ENCODE measurements at regions of chr7 and their contacts with region 1.

Region 1: DNA sequence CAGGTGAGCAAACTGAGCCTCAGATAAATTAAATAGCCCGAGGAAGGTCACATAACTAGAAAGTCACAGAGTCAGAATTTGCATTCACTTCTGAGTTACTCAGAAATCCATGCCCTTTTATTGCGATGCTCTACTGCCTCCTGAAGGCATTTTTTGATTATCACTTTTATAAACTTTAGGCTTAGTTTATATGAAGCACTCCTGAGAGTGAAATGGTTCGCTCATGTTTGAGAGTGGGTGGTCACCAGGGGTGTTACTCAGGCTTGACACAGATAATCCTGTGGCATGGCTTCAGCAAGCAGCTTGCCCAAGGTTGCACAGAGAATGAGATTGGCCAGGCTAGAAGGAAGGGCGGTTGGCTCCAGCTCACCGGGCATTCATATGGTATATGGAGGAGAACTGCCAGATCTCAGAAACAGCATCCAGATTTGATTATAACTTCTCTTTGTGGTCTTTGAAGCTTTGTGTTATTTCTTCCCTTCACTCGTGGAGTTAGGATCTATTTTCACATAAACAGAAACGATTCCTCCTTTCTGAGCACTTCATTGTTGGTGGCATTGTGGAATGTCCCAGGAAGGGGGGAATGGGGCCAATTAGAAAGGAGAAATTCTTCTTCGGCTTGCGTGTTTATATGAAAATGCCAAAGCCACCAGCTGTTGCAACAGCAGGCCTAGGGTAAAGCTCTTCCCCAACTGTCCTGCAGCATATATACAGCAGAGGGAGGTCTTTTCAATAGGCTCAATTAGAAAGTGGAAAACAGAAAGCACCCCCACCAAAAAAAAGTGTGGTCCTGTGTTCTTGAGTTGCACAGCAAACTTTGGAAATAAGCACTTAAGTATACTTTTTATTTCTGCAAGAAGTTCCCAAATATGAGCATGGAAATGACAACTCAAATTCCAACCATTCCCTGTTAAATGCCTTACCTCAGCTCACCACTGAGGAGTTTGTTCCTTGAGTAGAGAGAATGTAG is 628.8 kb downstream of the SUGCT start:
- DNase-seq: no peak
- H3K4me3 ChIP-seq: peak overlapping the region; percentile 9 to 16
- H3K27ac ChIP-seq: peak overlapping the region; percentile 60 to 67
- H3K4me1 ChIP-seq: peaks cover 0 to 41% (median 13%) of the 10 kb centered on the region in 4 donors
- H3K27me3 ChIP-seq: no peaks in the 10 kb centered on the region
- CTCF ChIP-seq: peak; percentile 33 to 48

Region 2: GRCh38 chr7:40232242-40232893 is 531.2 kb before region 1 on chr7:
- intact Hi-C with region 1: loop called (anchors 10 kb)
- DNase-seq: no peak
- H3K4me3 ChIP-seq: no peak overlapping the region
- H3K27ac ChIP-seq: peak overlapping the region; percentile 52 to 55
- H3K4me1 ChIP-seq: peaks cover 0 to 8% (median 0%) of the 10 kb centered on the region in 4 donors
- H3K27me3 ChIP-seq: no peaks in the 10 kb centered on the region
- CTCF ChIP-seq: peak; percentile 66 to 79

Region 3: DNA sequence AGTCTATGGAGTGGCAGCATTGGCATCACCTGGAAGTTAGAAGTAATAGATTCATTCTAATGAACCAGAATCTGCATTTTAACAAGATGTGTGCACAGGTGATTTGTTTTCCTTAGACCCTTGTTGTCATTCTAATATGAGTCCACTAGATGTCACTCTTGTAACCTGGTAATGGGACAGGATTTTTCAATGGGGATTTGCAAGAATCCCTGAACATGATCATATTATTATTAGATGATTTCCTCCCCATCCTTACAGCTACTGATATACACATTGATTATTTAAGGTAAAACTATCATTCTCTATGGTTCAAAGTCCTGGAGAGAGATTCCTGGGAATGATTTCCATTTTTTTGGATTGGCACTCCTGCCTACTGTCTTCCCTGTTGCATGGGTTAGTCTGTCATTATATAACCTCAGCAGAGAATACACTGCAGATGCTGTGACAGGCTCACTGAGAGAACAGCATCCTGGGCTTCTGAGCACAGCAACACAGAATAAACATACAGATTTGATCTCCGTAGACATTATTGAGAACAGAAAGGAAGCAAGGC is 433.9 kb before region 1 on chr7:
- intact Hi-C with region 1: loop called (anchors 10 kb)
- DNase-seq: no peak
- H3K4me3 ChIP-seq: no peak overlapping the region
- H3K27ac ChIP-seq: peak overlapping the region; percentile 47 to 70
- H3K4me1 ChIP-seq: peaks cover 0 to 55% (median 8%) of the 10 kb centered on the region in 4 donors
- H3K27me3 ChIP-seq: no peaks in the 10 kb centered on the region
- CTCF ChIP-seq: peak; percentile 76 to 86